T-cell (primary cell): ENCODE measurements at regions of chr1 and their contacts with region 1.

Region 1: DNA sequence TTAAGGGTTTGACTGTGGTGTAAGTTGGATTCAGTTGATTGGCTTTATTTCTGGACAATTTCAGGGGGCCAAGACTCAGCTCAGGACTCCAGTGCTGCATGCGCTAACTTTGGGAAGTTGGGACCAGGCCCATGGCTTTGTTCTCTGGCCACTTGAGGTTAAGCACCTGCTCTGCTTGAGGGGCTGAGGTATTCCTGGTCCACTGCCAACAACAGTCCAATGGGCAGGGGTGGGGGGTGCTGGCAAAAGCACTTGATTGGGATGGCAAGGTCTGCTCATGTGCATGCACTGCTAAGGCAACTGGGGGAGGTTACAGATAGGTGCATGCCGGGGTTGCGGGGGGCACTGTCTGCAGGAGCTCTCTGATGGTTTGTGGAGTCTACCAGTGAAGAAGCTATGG is 52.6 kb upstream of the ASB17 start:
- DNase-seq: no peak
- ATAC-seq: no peak
- H3K4me3 ChIP-seq: no peak overlapping the region
- H3K4me3 Mint-ChIP-seq: no peak overlapping the region
- H3K27ac ChIP-seq: no peak overlapping the region
- H3K27ac Mint-ChIP-seq: no peak overlapping the region
- H3K4me1 ChIP-seq: no peaks in the 10 kb centered on the region
- H3K4me1 Mint-ChIP-seq: no peaks in the 10 kb centered on the region
- H3K27me3 ChIP-seq: peaks cover 0 to 5% of the 10 kb centered on the region in 2 experiments
- H3K27me3 Mint-ChIP-seq: peaks cover 3 to 4% of the 10 kb centered on the region in 2 donors

Region 2: GRCh38 chr1:75950176-75950575 is 34.6 kb before region 1 on chr1:
- CTCF ChIA-PET with region 1: no interaction called
- POLR2A ChIA-PET with region 1: interaction called in 1 of 2 experiments, 10 read pairs
- DNase-seq: no peak
- ATAC-seq: no peak
- H3K4me3 ChIP-seq: no peak overlapping the region
- H3K4me3 Mint-ChIP-seq: no peak overlapping the region
- H3K27ac ChIP-seq: no peak overlapping the region
- H3K27ac Mint-ChIP-seq: no peak overlapping the region
- H3K4me1 ChIP-seq: no peaks in the 10 kb centered on the region
- H3K4me1 Mint-ChIP-seq: no peaks in the 10 kb centered on the region
- H3K27me3 ChIP-seq: no peaks in the 10 kb centered on the region
- H3K27me3 Mint-ChIP-seq: peaks cover 1 to 8% of the 10 kb centered on the region in 2 donors